Ascending aorta (tissue), 2 donors: ENCODE measurements at regions of chr6 and their contacts with region 1.

Region 1: GRCh38 chr6:132798869-132799538 is 567 bp upstream of the SLC18B1 start:
- DNase-seq: peak in 1 of 2 donors; percentile 75
- H3K4me3 ChIP-seq: peak overlapping the region in 1 of 2 donors; percentile 54
- H3K27ac ChIP-seq: peak overlapping the region; percentile 4 to 22
- H3K4me1 ChIP-seq: no peaks in the 10 kb centered on the region
- H3K27me3 ChIP-seq: no peaks in the 10 kb centered on the region
- CTCF ChIP-seq: peak; percentile 37 to 77 (median 76)

Region 2: GRCh38 chr6:132527791-132528190 is 271.2 kb before region 1 on chr6:
- intact Hi-C with region 1: loop called (anchors 5 kb)
- DNase-seq: no peak
- H3K4me3 ChIP-seq: no peak overlapping the region
- H3K27ac ChIP-seq: no peak overlapping the region
- H3K4me1 ChIP-seq: no peaks in the 10 kb centered on the region
- H3K27me3 ChIP-seq: no peaks in the 10 kb centered on the region
- CTCF ChIP-seq: no peak

Region 3: GRCh38 chr6:132952031-132952867 is 153.2 kb after region 1 on chr6:
- intact Hi-C with region 1: no loop called
- DNase-seq: no peak
- H3K4me3 ChIP-seq: no peak overlapping the region
- H3K27ac ChIP-seq: no peak overlapping the region
- H3K4me1 ChIP-seq: no peaks in the 10 kb centered on the region
- H3K27me3 ChIP-seq: no peaks in the 10 kb centered on the region
- CTCF ChIP-seq: no peak

Region 4: GRCh38 chr6:133436652-133437051 is 637.6 kb after region 1 on chr6:
- intact Hi-C with region 1: no loop called
- DNase-seq: no peak
- H3K4me3 ChIP-seq: no peak overlapping the region
- H3K27ac ChIP-seq: no peak overlapping the region
- H3K4me1 ChIP-seq: no peaks in the 10 kb centered on the region
- H3K27me3 ChIP-seq: no peaks in the 10 kb centered on the region
- CTCF ChIP-seq: no peak